Naive thymus-derived CD4-positive, alpha-beta T cell (primary cell): ENCODE measurements at regions of chr1 and their contacts with region 1.

Region 1: GRCh38 chr1:88683541-88684481 is at the start of gene PKN2:
- DNase-seq: peak; percentile 94 to 98 (median 97)
- ATAC-seq: peak; percentile 96
- H3K4me3 ChIP-seq: peak within 1 kb of the TSS; percentile 91
- H3K4me3 Mint-ChIP-seq: peak within 1 kb of the TSS; percentile 89 to 99 (median 97)
- H3K27ac ChIP-seq: peak within 1 kb of the TSS; percentile 89
- H3K27ac Mint-ChIP-seq: peak within 1 kb of the TSS; percentile 96 to 100 (median 97)
- H3K4me1 ChIP-seq: peaks cover 18 to 19% of the 10 kb centered on the region in 2 donors
- H3K4me1 Mint-ChIP-seq: peaks cover 18 to 53% (median 36%) of the 10 kb centered on the region in 7 donors
- H3K27me3 ChIP-seq: no peaks in the 10 kb centered on the region
- H3K27me3 Mint-ChIP-seq: peaks cover 0 to 12% (median 0%) of the 10 kb centered on the region in 5 donors
- total RNA-seq, gene PKN2: 32.1 to 53.8 (median 46.9) TPM

Region 2: DNA sequence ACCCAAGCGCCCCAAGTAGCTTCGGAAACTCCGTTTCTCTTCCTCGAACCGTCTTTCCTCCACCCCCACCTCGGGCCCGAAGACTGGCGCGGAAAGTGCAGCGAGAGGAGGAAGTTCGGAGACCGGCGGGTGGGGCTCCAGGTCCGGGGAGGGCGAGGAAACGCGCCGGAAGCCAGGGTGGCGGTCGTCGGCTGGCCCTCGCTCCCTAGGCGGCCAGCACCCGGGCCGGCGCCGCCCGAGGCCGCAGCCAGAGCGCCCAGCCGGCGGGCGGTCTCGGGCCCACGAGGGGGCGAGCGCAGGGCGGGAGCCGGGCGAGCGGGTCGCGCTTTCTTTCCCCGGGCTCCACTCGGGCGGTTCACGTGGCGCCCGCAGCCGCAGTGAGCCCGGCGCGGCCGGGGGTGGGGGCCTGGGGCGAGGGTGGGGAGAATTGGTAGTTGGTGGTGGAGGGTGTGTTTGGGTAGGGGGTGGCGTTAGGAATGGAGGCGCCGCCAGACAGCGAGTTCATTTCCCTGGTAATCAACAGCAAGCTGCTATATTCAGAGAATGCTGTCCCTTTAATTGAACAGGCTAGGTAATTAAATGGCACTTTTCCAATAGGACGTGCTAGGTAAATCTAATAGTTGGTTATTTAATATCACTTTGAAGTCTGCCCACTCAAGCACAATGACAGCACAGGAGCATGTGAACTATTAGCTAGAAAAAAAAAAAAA is 1348.5 kb before region 1 on chr1:
- CTCF ChIA-PET with region 1: no interaction called
- POLR2A ChIA-PET with region 1: no interaction called
- intact Hi-C with region 1: loop called (anchors 1 to 2 kb)
- DNase-seq: peak; percentile 30 to 68 (median 52)
- ATAC-seq: peak; percentile 68
- H3K4me3 ChIP-seq: peak overlapping the region; percentile 37
- H3K4me3 Mint-ChIP-seq: peak overlapping the region; percentile 81 to 94 (median 90)
- H3K27ac ChIP-seq: peak overlapping the region; percentile 38
- H3K27ac Mint-ChIP-seq: peak overlapping the region; percentile 16 to 95 (median 76)
- H3K4me1 ChIP-seq: peaks cover 28 to 29% of the 10 kb centered on the region in 2 donors
- H3K4me1 Mint-ChIP-seq: peaks cover 19 to 63% (median 46%) of the 10 kb centered on the region in 7 donors
- H3K27me3 ChIP-seq: peaks cover 0 to 10% of the 10 kb centered on the region in 2 donors
- H3K27me3 Mint-ChIP-seq: peaks cover 11 to 45% (median 27%) of the 10 kb centered on the region in 5 donors

Region 3: DNA sequence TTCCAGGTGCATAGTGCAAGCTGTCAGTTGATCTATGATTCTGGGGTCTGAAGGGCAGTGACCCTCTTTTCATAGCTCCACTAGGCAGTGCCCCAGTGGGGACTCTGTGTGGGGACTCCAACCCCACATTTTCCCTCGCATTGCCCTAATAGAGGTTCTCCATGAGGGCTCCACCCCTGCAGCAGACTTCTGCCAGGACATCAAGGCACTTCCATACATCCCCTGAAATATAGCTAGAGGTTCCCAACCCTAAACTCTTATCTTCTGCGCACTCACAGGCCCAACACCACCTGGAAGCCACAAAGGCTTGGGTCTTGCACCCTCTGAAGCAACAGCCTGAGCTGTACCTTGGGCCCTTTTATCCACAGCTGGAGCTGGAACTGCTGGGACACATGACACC is 65.5 kb before region 1 on chr1:
- CTCF ChIA-PET with region 1: no interaction called
- POLR2A ChIA-PET with region 1: no interaction called
- intact Hi-C with region 1: no loop called
- DNase-seq: no peak
- ATAC-seq: no peak
- H3K4me3 ChIP-seq: no peak overlapping the region
- H3K4me3 Mint-ChIP-seq: no peak overlapping the region
- H3K27ac ChIP-seq: no peak overlapping the region
- H3K27ac Mint-ChIP-seq: no peak overlapping the region
- H3K4me1 ChIP-seq: no peaks in the 10 kb centered on the region
- H3K4me1 Mint-ChIP-seq: no peaks in the 10 kb centered on the region
- H3K27me3 ChIP-seq: no peaks in the 10 kb centered on the region
- H3K27me3 Mint-ChIP-seq: peaks cover 3 to 23% (median 5%) of the 10 kb centered on the region in 5 donors

Region 4: DNA sequence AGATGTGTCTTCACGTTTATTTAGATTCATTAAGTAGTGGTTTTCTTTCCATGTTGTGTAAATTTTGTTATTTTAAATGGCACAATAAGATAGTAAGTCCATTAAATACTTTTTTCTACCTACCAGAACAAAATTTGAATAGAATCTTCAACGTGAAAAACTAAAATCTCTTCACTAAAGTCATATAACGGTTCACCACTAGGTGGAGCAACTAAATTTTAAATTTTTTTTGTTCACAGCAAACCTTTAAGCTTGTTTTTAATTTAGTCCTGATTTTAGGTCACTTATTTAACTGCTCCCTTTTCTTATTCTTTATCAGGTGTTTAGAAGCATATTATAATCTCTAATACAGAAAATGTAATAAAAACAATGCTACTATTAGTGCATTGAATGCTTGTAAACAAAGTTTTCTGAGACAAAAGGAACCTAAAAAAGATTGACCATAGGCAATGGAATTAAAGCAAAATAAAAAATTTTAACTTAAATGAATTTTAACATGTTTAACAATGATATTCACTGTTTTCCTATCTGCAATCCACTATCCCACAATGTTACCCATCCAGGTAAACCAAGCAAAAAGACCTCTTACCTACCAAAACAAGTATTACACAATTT is 28.0 kb before region 1 on chr1:
- CTCF ChIA-PET with region 1: interaction called, 28 read pairs
- POLR2A ChIA-PET with region 1: interaction called, 21 read pairs
- intact Hi-C with region 1: loop called (anchors 1 kb)
- DNase-seq: peak in 6 of 9 donors; percentile 5 to 49 (median 38)
- ATAC-seq: peak; percentile 34
- H3K4me3 ChIP-seq: no peak overlapping the region
- H3K4me3 Mint-ChIP-seq: no peak overlapping the region
- H3K27ac ChIP-seq: no peak overlapping the region
- H3K27ac Mint-ChIP-seq: no peak overlapping the region
- H3K4me1 ChIP-seq: no peaks in the 10 kb centered on the region
- H3K4me1 Mint-ChIP-seq: peaks cover 2 to 20% (median 16%) of the 10 kb centered on the region in 7 donors
- H3K27me3 ChIP-seq: no peaks in the 10 kb centered on the region
- H3K27me3 Mint-ChIP-seq: peaks cover 0 to 3% (median 0%) of the 10 kb centered on the region in 5 donors

Region 5: DNA sequence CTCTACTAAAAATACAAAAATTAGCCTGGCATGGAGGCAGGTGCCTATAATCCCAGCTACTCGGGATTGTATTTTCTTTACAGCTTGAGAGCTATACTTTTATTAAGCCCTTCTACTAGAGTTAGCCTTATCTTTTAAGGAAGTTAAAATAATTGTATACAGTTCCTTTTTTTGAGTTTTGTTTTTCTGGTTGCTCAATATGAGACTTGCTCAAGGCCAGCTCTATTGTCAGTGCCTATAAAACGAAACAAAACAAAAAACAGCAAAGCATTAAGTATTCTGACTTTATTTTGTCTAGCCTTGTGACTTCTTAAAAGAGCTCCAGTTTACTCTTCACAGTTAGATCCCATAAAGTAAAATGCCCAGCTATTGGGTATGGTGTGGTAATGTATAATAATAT is 17.5 kb after region 1 on chr1:
- CTCF ChIA-PET with region 1: no interaction called
- POLR2A ChIA-PET with region 1: interaction called, 6 read pairs
- intact Hi-C with region 1: loop called (anchors 1 to 2 kb)
- DNase-seq: no peak
- ATAC-seq: peak; percentile 85
- H3K4me3 ChIP-seq: no peak overlapping the region
- H3K4me3 Mint-ChIP-seq: no peak overlapping the region
- H3K27ac ChIP-seq: no peak overlapping the region
- H3K27ac Mint-ChIP-seq: peak overlapping the region in 1 of 9 donors; percentile 19
- H3K4me1 ChIP-seq: no peaks in the 10 kb centered on the region
- H3K4me1 Mint-ChIP-seq: peaks cover 10 to 60% (median 50%) of the 10 kb centered on the region in 7 donors
- H3K27me3 ChIP-seq: no peaks in the 10 kb centered on the region
- H3K27me3 Mint-ChIP-seq: no peaks in the 10 kb centered on the region

Region 6: GRCh38 chr1:88990426-88990825 is 306.6 kb after region 1 on chr1:
- CTCF ChIA-PET with region 1: no interaction called
- POLR2A ChIA-PET with region 1: no interaction called
- intact Hi-C with region 1: loop called (anchors 1 kb)
- DNase-seq: no peak
- ATAC-seq: no peak
- H3K4me3 ChIP-seq: no peak overlapping the region
- H3K4me3 Mint-ChIP-seq: peak overlapping the region in 4 of 10 donors; percentile 1 to 42 (median 23)
- H3K27ac ChIP-seq: no peak overlapping the region
- H3K27ac Mint-ChIP-seq: peak overlapping the region in 6 of 9 donors; percentile 61 to 90 (median 78)
- H3K4me1 ChIP-seq: peaks cover 15 to 28% of the 10 kb centered on the region in 2 donors
- H3K4me1 Mint-ChIP-seq: peaks cover 24 to 56% (median 45%) of the 10 kb centered on the region in 7 donors
- H3K27me3 ChIP-seq: no peaks in the 10 kb centered on the region
- H3K27me3 Mint-ChIP-seq: no peaks in the 10 kb centered on the region

Region 7: DNA sequence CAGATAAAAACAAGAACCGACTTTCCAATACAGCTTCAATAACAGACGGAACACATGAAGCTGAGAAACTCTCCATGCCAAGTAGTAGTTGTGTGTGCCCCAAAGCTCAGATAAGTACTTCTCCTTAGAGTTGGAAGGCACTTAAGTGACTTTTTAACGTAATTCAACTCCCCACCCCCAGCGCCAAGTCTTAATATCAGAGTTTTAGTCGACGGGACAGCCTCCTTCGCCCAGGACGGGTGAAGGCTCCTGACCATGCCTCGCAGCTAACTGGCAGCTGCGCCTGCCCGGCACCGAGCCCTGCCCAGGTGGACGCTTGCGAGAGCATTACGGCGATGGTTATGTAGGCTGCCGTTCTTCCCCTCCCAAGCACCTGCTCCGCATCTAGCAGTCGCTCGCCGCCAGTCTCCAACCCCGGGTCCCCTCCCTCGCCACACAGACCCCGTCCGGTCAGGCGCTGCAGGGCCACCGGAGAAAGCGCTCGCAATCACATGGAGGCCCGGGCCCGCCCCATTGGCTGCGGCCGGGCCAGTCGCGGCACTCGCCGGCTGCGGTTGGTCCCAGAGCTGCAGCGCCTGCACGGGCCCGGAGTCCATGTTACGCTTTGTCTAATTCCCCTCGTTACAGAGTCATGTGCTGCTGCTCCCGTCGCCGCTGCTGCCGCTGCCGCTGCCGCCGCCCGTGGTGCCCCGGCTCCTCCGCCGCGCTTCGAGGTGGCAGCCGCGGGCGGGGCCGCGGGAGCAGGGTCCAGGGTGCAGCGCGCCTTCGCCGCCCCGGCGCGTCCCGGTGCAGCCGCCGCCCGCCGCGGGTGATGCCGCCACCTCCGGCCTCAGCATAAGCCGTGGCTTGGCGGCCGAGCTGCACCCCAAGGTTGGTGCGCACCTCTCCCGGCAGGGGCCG is 1136.9 kb after region 1 on chr1 and contains the start of gene LRRC8D:
- CTCF ChIA-PET with region 1: interaction called, 3 read pairs
- POLR2A ChIA-PET with region 1: no interaction called
- intact Hi-C with region 1: loop called in 1 of 2 experiments (anchors 1 kb)
- DNase-seq: peak; percentile 46 to 80 (median 57)
- ATAC-seq: peak; percentile 84
- H3K4me3 ChIP-seq: peak within 1 kb of the TSS; percentile 84
- H3K4me3 Mint-ChIP-seq: peak within 1 kb of the TSS; percentile 85 to 97 (median 89)
- H3K27ac ChIP-seq: peak within 1 kb of the TSS; percentile 66
- H3K27ac Mint-ChIP-seq: peak within 1 kb of the TSS; percentile 67 to 92 (median 81)
- H3K4me1 ChIP-seq: peaks cover 7 to 14% of the 10 kb centered on the region in 2 donors
- H3K4me1 Mint-ChIP-seq: peaks cover 20 to 44% (median 36%) of the 10 kb centered on the region in 7 donors
- H3K27me3 ChIP-seq: no peaks in the 10 kb centered on the region
- H3K27me3 Mint-ChIP-seq: peaks cover 0 to 20% (median 0%) of the 10 kb centered on the region in 5 donors
- total RNA-seq, gene LRRC8D: 21.1 to 42.6 (median 37.3) TPM